Caco-2 (cell line): ENCODE measurements at regions of chr15 and their contacts with region 1.

Region 1: GRCh38 chr15:53862386-53862785 is 102.9 kb upstream of the WDR72 start:
- DNase-seq: peak; percentile 44 to 65
- H3K4me3 ChIP-seq: no peak overlapping the region; the same call in 1 of the 2 replicates
- H3K4me3 Mint-ChIP-seq: peak overlapping the region; percentile 60
- H3K27ac Mint-ChIP-seq: peak overlapping the region; percentile 93
- H3K4me1 ChIP-seq: peaks cover 45% of the 10 kb centered on the region
- H3K4me1 Mint-ChIP-seq: peaks cover 25% of the 10 kb centered on the region
- H3K27me3 ChIP-seq: no peaks in the 10 kb centered on the region
- H3K27me3 Mint-ChIP-seq: no peaks in the 10 kb centered on the region
- CTCF ChIP-seq: no peak

Region 2: GRCh38 chr15:53833134-53833624 is 29.2 kb before region 1 on chr15:
- CTCF ChIA-PET with region 1: interaction called, 3 read pairs
- POLR2A ChIA-PET with region 1: interaction called, 3 read pairs
- intact Hi-C with region 1: loop called (anchors 1 kb)
- DNase-seq: peak in 1 of 2 experiments; percentile 42
- H3K4me3 ChIP-seq: no peak overlapping the region
- H3K4me3 Mint-ChIP-seq: peak overlapping the region; percentile 44
- H3K27ac Mint-ChIP-seq: peak overlapping the region; percentile 91
- H3K4me1 ChIP-seq: peaks cover 86% of the 10 kb centered on the region
- H3K4me1 Mint-ChIP-seq: peaks cover 73% of the 10 kb centered on the region
- H3K27me3 ChIP-seq: no peaks in the 10 kb centered on the region
- H3K27me3 Mint-ChIP-seq: no peaks in the 10 kb centered on the region
- CTCF ChIP-seq: no peak

Region 3: DNA sequence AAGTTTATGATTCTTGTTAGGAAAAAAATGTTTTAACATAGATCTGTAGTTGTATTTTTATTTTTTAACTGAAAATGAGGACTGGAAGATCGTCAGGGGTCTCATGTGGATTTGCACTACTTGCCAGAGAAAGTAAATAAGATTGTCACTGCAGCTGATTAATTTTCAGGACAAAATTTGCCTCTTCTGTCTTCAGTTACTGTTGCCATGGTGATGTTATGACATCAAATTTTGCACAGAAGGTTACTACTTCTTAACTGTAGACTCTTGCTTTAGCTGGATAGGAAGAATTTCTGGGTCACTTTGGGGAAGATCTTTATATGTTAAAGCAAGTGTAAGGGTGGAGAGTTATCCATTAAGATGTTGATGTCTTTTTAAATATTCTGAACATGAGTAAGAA is 20.7 kb before region 1 on chr15:
- CTCF ChIA-PET with region 1: interaction called, 3 read pairs
- POLR2A ChIA-PET with region 1: interaction called, 9 read pairs
- intact Hi-C with region 1: loop called (anchors 1 kb)
- DNase-seq: no peak
- H3K4me3 ChIP-seq: no peak overlapping the region
- H3K4me3 Mint-ChIP-seq: peak overlapping the region; percentile 43
- H3K27ac Mint-ChIP-seq: peak overlapping the region; percentile 86
- H3K4me1 ChIP-seq: peaks cover 81% of the 10 kb centered on the region
- H3K4me1 Mint-ChIP-seq: peaks cover 48% of the 10 kb centered on the region
- H3K27me3 ChIP-seq: no peaks in the 10 kb centered on the region
- H3K27me3 Mint-ChIP-seq: no peaks in the 10 kb centered on the region
- CTCF ChIP-seq: no peak

Region 4: DNA sequence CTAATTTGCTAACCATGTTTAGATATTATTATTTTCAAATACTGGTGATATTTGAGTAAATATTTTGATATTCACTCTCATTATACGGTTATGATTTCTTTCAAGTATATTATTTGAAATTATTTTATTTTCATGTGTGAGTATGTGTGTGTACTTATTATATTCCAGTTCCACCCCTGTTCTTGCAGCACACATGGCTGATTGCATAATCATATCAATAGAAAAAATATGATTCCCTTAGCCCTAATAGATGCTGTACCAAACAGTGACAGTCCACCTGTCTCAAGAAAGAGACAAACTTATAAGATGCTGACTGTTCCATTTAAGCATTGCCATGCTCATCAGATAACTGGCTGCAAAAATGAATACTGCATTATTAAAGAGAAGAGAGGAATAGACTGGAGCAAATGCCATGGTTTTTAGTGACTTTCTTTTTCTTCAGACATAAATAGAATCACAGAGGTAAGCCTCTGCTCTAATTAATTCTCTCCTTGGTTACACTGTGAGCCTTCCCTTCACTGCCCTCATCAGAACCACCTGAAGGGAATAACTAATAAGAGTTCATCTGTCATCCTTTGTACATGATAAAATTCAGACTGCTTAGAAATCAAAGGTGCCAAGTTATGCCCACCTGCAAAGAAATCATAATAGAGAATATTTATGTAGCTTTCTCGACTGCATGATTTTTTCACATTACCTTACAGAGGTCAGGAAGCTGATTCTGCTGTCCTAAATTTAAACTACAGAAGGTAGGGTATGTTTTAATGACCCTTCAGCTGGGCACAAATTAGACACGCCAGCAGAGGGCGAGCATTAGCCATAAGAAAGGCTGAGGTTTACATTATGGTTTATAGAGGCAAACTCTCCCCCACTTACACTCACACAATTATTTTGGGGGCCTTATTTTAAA is 100.2 kb after region 1 on chr15:
- CTCF ChIA-PET with region 1: no interaction called
- POLR2A ChIA-PET with region 1: no interaction called
- intact Hi-C with region 1: no loop called
- DNase-seq: peak; percentile 45 to 47
- H3K4me3 ChIP-seq: no peak overlapping the region
- H3K4me3 Mint-ChIP-seq: no peak overlapping the region
- H3K27ac Mint-ChIP-seq: no peak overlapping the region
- H3K4me1 ChIP-seq: 0 out of 2 replicates have a peak, but pooled peaks cover 6% of the 10 kb centered on the region
- H3K4me1 Mint-ChIP-seq: no peaks in the 10 kb centered on the region
- H3K27me3 ChIP-seq: no peaks in the 10 kb centered on the region
- H3K27me3 Mint-ChIP-seq: no peaks in the 10 kb centered on the region
- CTCF ChIP-seq: peak; percentile 63 to 64

Region 5: DNA sequence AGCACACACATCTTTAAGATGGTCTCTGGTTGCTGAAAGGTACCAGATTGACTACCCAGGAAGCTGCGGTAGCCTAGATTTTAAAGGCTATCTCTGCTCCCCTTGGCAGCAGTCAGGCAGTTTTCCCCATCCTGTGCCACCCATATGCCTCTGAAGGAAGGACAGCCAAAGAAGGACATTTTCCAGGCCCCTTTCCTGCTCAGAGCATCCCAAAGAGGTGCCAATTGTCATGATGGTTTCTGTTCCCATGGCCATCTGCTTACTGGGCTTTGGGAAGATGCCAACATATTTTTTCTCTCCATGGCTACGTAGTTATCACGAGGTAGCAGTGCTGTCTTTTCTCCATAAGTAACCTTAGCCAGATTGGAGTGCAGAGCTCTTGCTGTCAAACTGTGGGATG is 155.6 kb after region 1 on chr15:
- CTCF ChIA-PET with region 1: no interaction called
- POLR2A ChIA-PET with region 1: no interaction called
- intact Hi-C with region 1: no loop called
- DNase-seq: no peak
- H3K4me3 ChIP-seq: no peak overlapping the region
- H3K4me3 Mint-ChIP-seq: no peak overlapping the region
- H3K27ac Mint-ChIP-seq: no peak overlapping the region
- H3K4me1 ChIP-seq: no peaks in the 10 kb centered on the region
- H3K4me1 Mint-ChIP-seq: no peaks in the 10 kb centered on the region
- H3K27me3 ChIP-seq: no peaks in the 10 kb centered on the region
- H3K27me3 Mint-ChIP-seq: no peaks in the 10 kb centered on the region
- CTCF ChIP-seq: no peak